ENCODE measurements at regions of chr12 and their contacts with region 1.

Region 1: DNA sequence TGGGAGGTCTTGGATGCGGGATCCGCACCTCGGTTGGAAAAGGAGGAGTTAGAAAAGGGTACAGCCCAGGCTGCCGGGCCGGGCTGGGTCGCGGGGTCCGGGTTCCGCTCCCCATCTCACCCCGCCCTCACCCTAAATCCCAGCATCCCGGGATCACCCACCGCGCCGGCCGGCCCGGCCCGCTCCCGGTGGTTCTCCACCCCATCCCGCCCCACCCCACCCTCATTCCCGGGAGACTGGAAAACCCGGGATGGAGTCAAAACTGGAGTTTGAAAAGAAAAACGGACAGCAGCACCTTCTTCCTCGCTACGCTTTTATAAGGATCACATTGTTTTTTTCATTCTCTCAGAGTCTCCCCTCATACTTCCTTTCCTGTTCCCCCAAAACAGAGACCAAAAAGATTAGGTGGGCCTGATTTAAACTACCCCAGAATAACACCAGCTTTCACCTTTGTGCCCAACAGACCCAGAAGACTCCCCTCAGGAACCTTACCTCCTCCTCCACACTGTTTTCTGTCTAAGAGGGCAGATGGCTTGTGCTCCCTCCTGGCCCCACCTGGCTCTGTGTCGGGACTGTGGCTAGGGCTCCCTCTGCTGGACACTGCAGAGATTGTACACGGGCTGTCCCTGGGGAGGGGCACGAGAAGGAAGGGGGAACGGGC is 2.8 kb downstream of the GLI1 start:
- DNase-seq: no peak
- H3K4me3 ChIP-seq: peak overlapping the region; percentile 77
- CTCF ChIP-seq: peak; percentile 99

Region 2: DNA sequence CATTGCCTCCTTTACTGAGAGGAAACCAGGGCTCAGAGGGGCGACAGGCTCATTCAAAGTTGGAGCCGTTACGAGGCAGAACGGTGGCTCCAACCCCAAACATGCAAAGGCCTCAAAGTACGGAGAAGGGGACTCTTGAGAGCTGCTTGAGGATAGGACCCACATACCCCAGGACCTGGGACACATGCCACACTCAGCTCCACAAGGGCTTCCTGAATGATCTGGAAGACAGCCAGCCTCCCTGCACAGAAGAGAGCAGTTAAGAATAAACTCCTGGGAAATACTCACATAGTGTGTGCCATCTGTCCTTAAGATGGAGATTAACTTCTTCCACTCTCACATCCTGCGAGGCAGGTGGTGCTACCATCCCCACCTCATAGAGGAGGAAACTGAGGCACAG is 272.3 kb before region 1 on chr12:
- CTCF ChIA-PET with region 1: no interaction called
- POLR2A ChIA-PET with region 1: no interaction called
- DNase-seq: no peak
- H3K4me3 ChIP-seq: no peak overlapping the region
- CTCF ChIP-seq: no peak

Region 3: DNA sequence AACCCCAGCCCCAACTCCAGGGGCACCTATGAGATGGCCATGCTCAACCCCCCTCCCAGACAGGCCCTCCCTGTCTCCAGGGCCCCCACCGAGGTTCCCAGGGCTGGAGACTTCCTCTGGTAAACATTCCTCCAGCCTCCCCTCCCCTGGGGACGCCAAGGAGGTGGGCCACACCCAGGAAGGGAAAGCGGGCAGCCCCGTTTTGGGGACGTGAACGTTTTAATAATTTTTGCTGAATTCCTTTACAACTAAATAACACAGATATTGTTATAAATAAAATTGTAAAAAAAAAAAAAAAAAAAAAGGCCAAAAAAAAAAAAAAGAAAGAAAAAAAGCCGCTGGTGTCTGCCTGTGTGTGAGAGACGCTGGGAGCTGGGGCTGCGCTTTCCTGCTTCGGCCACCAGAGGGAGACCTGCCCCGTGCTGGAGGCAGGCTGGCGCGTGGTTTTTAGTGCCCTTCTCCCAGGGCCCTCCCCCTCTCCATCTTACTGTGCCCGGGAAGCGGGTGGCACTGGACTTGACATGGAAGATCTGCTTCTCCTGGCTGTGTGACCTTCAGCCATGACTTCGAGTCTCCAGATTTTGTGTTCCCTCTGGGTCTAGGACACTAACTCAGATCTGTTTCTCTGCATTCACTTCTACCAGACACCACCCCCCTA is 249.2 kb before region 1 on chr12:
- CTCF ChIA-PET with region 1: interaction called, 10 read pairs
- POLR2A ChIA-PET with region 1: no interaction called
- DNase-seq: no peak
- H3K4me3 ChIP-seq: no peak overlapping the region
- CTCF ChIP-seq: peak; percentile 89

Region 4: GRCh38 chr12:57238854-57239554 is 223.4 kb before region 1 on chr12:
- CTCF ChIA-PET with region 1: interaction called, 880 read pairs
- POLR2A ChIA-PET with region 1: no interaction called
- DNase-seq: no peak
- H3K4me3 ChIP-seq: peak overlapping the region; percentile 69
- CTCF ChIP-seq: peak; percentile 100

Region 5: GRCh38 chr12:57309420-57309819 is 153.0 kb before region 1 on chr12:
- CTCF ChIA-PET with region 1: interaction called, 86 read pairs
- POLR2A ChIA-PET with region 1: interaction called, 4 read pairs
- DNase-seq: peak; percentile 9
- H3K4me3 ChIP-seq: no peak overlapping the region
- CTCF ChIP-seq: no peak

Region 6: DNA sequence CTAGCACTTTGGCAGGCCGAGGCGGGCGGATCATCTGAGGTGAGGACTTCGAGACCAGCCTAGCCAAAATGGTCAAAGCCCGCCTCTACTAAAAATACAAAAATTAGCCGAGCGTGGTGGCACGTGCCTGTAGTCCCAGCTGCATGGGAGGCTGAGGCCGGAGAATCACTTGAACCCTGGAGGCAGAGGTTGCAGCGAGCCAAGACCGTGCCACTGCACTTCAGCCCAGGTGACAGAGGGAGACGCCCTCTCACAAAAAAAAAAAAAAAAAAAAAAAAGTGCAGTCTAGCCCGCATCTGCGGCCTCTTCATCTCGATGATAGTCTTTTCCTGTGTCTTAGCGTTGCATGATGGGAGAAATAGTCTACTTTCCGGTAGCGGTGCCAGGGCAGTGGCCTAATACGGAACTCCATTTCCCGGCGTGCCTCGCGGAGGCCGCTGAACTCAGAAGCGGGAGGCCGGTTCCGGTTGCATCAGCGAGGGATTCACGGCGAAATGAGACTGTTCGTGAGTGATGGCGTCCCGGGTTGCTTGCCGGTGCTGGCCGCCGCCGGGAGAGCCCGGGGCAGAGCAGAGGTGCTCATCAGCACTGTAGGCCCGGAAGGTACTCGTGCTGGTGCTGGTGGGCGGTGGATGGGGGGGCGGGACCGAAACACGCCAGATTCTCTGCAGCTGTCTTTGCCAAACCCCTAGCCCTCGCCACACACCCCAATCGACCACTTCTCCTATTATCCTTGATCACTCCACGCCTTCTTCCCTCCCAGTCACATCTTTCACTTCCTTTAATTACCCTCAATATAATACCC is 25.4 kb after region 1 on chr12 and contains the start of gene MARS1:
- CTCF ChIA-PET with region 1: interaction called, 321 read pairs
- POLR2A ChIA-PET with region 1: no interaction called
- DNase-seq: peak; percentile 73
- H3K4me3 ChIP-seq: peak within 1 kb of the TSS; percentile 99
- CTCF ChIP-seq: no peak

Region 7: DNA sequence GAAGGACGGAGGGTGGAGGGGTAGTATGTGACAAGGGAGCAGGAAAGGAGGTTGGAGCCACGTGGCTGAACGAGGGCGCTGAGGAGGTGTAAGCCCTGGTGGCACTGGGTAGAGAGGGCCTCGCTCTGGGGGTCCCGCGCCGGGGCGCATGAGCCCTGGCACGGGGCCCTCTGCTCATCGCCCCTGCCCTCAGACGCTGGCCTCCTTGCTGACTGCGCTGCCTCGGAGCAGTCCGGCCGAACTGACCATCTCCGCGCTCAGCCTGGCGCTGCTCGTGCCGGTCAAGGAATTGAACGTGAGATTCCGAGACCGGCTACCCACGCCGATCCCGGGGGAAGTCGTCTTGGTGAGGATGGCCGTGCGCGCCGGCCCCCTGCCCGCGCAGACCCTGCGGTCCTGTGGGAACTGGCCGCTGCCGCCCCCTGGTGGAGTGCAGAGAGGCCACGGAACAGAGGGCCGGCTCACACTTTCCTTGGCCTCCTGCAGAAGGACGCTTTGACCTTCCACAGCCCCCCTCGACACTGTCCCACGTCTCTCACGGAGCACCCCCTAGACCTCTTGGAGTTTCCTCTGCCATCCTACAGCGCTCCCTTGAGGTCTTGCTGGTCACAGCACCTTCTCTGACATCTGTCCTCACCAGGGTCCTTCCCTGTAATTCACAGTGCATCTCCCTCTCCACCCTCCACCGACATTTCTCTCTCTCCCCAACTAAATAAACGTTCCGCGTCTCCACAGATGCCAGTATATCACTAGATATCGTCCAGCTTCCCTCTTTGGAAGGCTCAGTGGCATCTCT is 159.3 kb after region 1 on chr12:
- CTCF ChIA-PET with region 1: interaction called, 12 read pairs
- POLR2A ChIA-PET with region 1: no interaction called
- DNase-seq: no peak
- H3K4me3 ChIP-seq: peak overlapping the region; percentile 50
- CTCF ChIP-seq: peak; percentile 92

Measured in AG04449 (cell line).